Activated CD8-positive, alpha-beta T cell treated with anti-CD3 and anti-CD28 coated beads, Interleukin-2, amount 10 ng/mL, durations not matched to agents 7 days and 5 days (primary cell): ENCODE measurements at regions of chr14 and their contacts with region 1.

Region 1: DNA sequence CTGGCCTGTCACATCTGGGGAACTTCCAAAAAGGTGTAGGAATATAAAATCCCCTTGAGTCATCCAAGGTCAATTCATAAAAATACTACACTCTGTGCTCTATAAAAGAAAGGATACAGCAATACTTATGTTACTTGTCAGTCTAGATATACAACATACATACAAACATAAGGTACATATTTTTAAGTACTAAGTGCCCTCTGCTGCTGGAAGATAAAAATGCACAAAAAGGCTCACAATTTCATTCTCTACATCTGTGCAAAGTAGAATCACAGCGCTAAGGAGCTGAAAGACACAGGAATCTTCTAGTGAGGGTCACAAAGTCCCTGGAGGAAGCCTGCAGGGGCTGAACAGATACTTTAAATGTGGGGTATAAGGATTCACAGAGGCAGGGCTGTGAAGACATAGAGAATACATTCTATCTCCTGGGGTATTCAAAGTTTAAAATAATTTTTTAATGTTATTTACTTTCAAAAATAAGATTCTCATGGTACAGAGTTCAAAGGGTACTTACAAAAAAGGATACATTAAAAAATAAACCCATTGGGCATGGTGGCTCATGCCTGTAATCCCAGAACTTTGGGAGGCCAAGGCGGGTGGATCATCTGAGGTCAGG is 10.2 kb upstream of the GOLGA5 start:
- DNase-seq: peak; percentile 63
- ATAC-seq: peak; percentile 82
- H3K4me3 Mint-ChIP-seq: no peak overlapping the region
- H3K27ac Mint-ChIP-seq: no peak overlapping the region
- H3K4me1 Mint-ChIP-seq: peaks cover 11% of the 10 kb centered on the region
- H3K27me3 Mint-ChIP-seq: peaks cover 2% of the 10 kb centered on the region

Region 2: DNA sequence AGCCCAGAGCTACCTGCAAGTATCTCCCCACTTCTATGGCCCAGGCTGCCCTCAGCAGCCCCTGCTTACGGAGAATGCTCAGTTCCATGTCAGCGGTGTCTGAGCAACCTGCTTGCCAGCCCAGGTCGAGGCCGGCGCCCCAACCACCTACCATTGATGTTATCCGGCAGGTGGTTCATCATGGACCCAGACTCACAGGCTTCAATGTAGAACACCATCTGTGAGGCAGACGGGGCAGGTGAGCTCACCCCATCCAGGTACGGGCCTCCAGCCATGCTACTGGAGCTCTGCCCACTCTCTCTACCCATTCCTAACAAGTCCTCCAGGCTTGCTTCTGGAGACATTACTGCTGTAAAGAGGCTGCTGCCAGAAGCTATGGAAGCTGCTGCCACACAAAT is 71.3 kb before region 1 on chr14:
- CTCF ChIA-PET with region 1: interaction called, 44 read pairs
- POLR2A ChIA-PET with region 1: no interaction called
- DNase-seq: no peak
- ATAC-seq: no peak
- H3K4me3 Mint-ChIP-seq: no peak overlapping the region
- H3K27ac Mint-ChIP-seq: no peak overlapping the region
- H3K4me1 Mint-ChIP-seq: no peaks in the 10 kb centered on the region
- H3K27me3 Mint-ChIP-seq: no peaks in the 10 kb centered on the region